Activated CD8-positive, alpha-beta T cell treated with anti-CD3 and anti-CD28 coated beads for 36 hours (primary cell): ENCODE measurements at regions of chr1 and their contacts with region 1.

Region 1: DNA sequence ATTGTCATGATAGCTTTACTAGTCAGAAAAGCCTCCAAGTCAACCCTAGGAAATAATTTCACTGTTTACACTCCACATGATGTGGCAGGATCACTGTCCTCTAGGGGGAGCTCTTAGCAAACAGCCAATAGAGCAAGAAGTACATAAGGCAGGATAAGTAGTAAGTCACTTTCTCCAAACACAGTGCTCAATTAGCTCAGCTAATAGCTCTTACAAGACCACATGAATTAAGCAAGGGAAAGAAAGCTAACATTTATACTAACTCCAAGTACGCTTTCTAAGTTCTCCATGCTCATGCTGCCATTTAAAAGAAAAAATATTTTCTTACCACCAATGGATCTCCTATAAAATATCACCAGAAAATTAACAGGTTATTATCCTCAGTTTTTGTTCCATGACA is 66.9 kb upstream of the LRIF1 start:
- DNase-seq: peak; percentile 75
- ATAC-seq: peak; percentile 67
- H3K4me3 Mint-ChIP-seq: no peak overlapping the region
- H3K27ac Mint-ChIP-seq: no peak overlapping the region
- H3K4me1 Mint-ChIP-seq: no peaks in the 10 kb centered on the region
- H3K27me3 Mint-ChIP-seq: peaks cover 5% of the 10 kb centered on the region
- CTCF ChIP-seq: peak; percentile 79

Region 2: DNA sequence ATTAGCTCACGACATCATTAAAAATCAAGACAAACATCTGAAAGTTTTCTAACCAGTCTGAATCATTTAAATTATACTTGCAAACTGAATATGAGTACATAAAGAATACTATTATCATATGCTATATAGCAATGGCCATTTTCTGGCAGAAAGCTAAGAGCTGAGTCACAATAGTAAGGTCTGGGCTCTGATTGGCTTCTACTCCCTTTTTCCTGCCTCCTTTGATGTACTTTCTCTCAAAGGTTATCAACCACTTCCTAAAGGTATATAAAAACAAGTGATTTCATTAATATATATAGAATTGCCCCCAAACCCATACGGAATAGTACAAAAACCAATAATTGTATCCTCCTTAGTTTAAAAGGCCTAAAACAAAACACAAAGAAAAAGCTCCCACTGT is 362.8 kb before region 1 on chr1:
- CTCF ChIA-PET with region 1: no interaction called
- POLR2A ChIA-PET with region 1: no interaction called
- intact Hi-C with region 1: no loop called
- DNase-seq: no peak
- ATAC-seq: peak; percentile 41
- H3K4me3 Mint-ChIP-seq: peak overlapping the region; percentile 56
- H3K27ac Mint-ChIP-seq: peak overlapping the region; percentile 79
- H3K4me1 Mint-ChIP-seq: peaks cover 45% of the 10 kb centered on the region
- H3K27me3 Mint-ChIP-seq: no peaks in the 10 kb centered on the region
- CTCF ChIP-seq: no peak

Region 3: GRCh38 chr1:110963691-110964399 is 66.7 kb before region 1 on chr1 and contains the start of gene LRIF1:
- CTCF ChIA-PET with region 1: interaction called, 11 read pairs
- POLR2A ChIA-PET with region 1: no interaction called
- intact Hi-C with region 1: no loop called
- DNase-seq: peak; percentile 100
- ATAC-seq: peak; percentile 97
- H3K4me3 Mint-ChIP-seq: peak within 1 kb of the TSS; percentile 84
- H3K27ac Mint-ChIP-seq: peak within 1 kb of the TSS; percentile 97
- H3K4me1 Mint-ChIP-seq: peaks cover 37% of the 10 kb centered on the region
- H3K27me3 Mint-ChIP-seq: peaks cover 7% of the 10 kb centered on the region
- CTCF ChIP-seq: peak; percentile 64
- total RNA-seq, gene LRIF1: 16.0 to 16.1 TPM

Region 4: GRCh38 chr1:111015225-111015624 is 15.4 kb before region 1 on chr1:
- CTCF ChIA-PET with region 1: interaction called, 34 read pairs
- POLR2A ChIA-PET with region 1: no interaction called
- intact Hi-C with region 1: no loop called
- DNase-seq: no peak
- ATAC-seq: no peak
- H3K4me3 Mint-ChIP-seq: no peak overlapping the region
- H3K27ac Mint-ChIP-seq: no peak overlapping the region
- H3K4me1 Mint-ChIP-seq: no peaks in the 10 kb centered on the region
- H3K27me3 Mint-ChIP-seq: peaks cover 20% of the 10 kb centered on the region
- CTCF ChIP-seq: no peak

Region 5: DNA sequence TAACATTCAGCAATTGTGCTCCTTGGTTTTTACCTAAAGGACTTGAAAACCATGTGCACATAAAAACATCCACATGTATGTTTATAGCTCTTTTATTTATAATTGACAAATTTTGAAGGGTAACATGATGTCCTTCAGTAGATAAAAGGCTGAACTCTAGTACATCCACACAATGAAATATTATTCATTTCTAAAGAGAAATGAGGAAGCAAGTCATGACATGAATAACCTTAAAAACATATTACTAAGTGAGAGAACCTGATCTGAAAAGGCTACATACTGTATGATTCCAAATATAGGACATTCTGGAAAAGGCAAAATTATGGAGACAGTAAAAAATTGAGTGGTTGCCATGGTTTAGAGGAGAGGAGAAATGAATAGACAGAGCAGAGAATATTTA is 59.0 kb after region 1 on chr1:
- CTCF ChIA-PET with region 1: interaction called, 13 read pairs
- POLR2A ChIA-PET with region 1: no interaction called
- intact Hi-C with region 1: no loop called
- DNase-seq: no peak
- ATAC-seq: no peak
- H3K4me3 Mint-ChIP-seq: no peak overlapping the region
- H3K27ac Mint-ChIP-seq: no peak overlapping the region
- H3K4me1 Mint-ChIP-seq: no peaks in the 10 kb centered on the region
- H3K27me3 Mint-ChIP-seq: peaks cover 5% of the 10 kb centered on the region
- CTCF ChIP-seq: no peak

Region 6: GRCh38 chr1:111399792-111400610 is 369.4 kb after region 1 on chr1:
- CTCF ChIA-PET with region 1: interaction called, 23 read pairs
- POLR2A ChIA-PET with region 1: no interaction called
- intact Hi-C with region 1: no loop called
- DNase-seq: peak; percentile 60
- ATAC-seq: no peak
- H3K4me3 Mint-ChIP-seq: no peak overlapping the region
- H3K27ac Mint-ChIP-seq: no peak overlapping the region
- H3K4me1 Mint-ChIP-seq: peaks cover 18% of the 10 kb centered on the region
- H3K27me3 Mint-ChIP-seq: no peaks in the 10 kb centered on the region
- CTCF ChIP-seq: peak; percentile 83